CD8-positive, alpha-beta T cell (primary cell): ENCODE measurements at regions of chr7 and their contacts with region 1.

Region 1: GRCh38 chr7:92833024-92833765 is 3.2 kb downstream of the CDK6 start:
- DNase-seq: peak; percentile 78 to 93 (median 88)
- ATAC-seq: peak; percentile 71
- H3K4me3 ChIP-seq: peak overlapping the region; percentile 85 to 96
- H3K4me3 Mint-ChIP-seq: peak overlapping the region; percentile 98
- H3K27ac ChIP-seq: peak overlapping the region; percentile 46 to 68
- H3K27ac Mint-ChIP-seq: peak overlapping the region; percentile 92
- H3K4me1 ChIP-seq: peaks cover 39% of the 10 kb centered on the region
- H3K4me1 Mint-ChIP-seq: peaks cover 60% of the 10 kb centered on the region
- H3K27me3 ChIP-seq: peaks cover 0 to 3% of the 10 kb centered on the region in 2 experiments
- H3K27me3 Mint-ChIP-seq: peaks cover 4% of the 10 kb centered on the region
- CTCF ChIP-seq: peak; percentile 81

Region 2: GRCh38 chr7:92245487-92246362 is 587.5 kb before region 1 on chr7 and contains the starts of genes ANKIB1 and KRIT1:
- CTCF ChIA-PET with region 1: no interaction called
- POLR2A ChIA-PET with region 1: no interaction called
- intact Hi-C with region 1: loop called in 1 of 2 experiments (anchors 10 kb)
- DNase-seq: peak; percentile 65 to 93 (median 88)
- ATAC-seq: peak; percentile 74
- H3K4me3 ChIP-seq: peak within 1 kb of the TSS; percentile 86 to 90
- H3K4me3 Mint-ChIP-seq: peak within 1 kb of the TSS; percentile 98
- H3K27ac ChIP-seq: peak within 1 kb of the TSS; percentile 93 to 98
- H3K27ac Mint-ChIP-seq: peak within 1 kb of the TSS; percentile 99
- H3K4me1 ChIP-seq: peaks cover 29% of the 10 kb centered on the region
- H3K4me1 Mint-ChIP-seq: peaks cover 52% of the 10 kb centered on the region
- H3K27me3 ChIP-seq: no peaks in the 10 kb centered on the region
- H3K27me3 Mint-ChIP-seq: no peaks in the 10 kb centered on the region
- CTCF ChIP-seq: no peak
- total RNA-seq, gene ANKIB1: 51.1 to 59.6 TPM
- total RNA-seq, gene KRIT1: 25.0 to 27.0 TPM

Region 3: GRCh38 chr7:92534572-92534971 is 298.6 kb before region 1 on chr7:
- CTCF ChIA-PET with region 1: interaction called, 3 read pairs
- POLR2A ChIA-PET with region 1: no interaction called
- intact Hi-C with region 1: loop called in 1 of 2 experiments (anchors 5 kb)
- DNase-seq: no peak
- ATAC-seq: no peak
- H3K4me3 ChIP-seq: no peak overlapping the region
- H3K4me3 Mint-ChIP-seq: no peak overlapping the region
- H3K27ac ChIP-seq: no peak overlapping the region
- H3K27ac Mint-ChIP-seq: no peak overlapping the region
- H3K4me1 ChIP-seq: peaks cover 11% of the 10 kb centered on the region
- H3K4me1 Mint-ChIP-seq: peaks cover 38% of the 10 kb centered on the region
- H3K27me3 ChIP-seq: no peaks in the 10 kb centered on the region
- H3K27me3 Mint-ChIP-seq: no peaks in the 10 kb centered on the region
- CTCF ChIP-seq: no peak

Region 4: DNA sequence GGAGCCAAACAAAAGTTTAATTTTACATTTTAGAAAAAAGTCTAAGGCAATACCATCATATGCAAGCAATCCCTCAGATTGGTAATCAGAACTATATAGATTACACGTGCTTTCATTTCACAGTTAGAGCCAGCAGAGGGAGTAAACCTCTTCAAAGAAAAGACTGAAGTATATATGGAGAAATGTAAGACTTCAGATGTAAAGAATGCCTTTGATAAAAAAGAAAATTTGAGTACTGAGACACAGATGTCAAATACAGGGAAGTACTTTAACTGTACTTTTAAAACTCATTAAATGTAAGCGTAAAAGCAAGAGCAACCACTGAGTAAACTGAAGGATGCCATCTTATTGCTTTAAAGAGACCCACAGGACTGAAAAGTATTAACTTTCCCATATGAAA is 141.6 kb before region 1 on chr7:
- CTCF ChIA-PET with region 1: interaction called, 15 read pairs
- POLR2A ChIA-PET with region 1: no interaction called
- intact Hi-C with region 1: loop called (anchors 1 kb)
- DNase-seq: peak in 3 of 9 experiments; percentile 17 to 68 (median 49)
- ATAC-seq: peak; percentile 86
- H3K4me3 ChIP-seq: no peak overlapping the region
- H3K4me3 Mint-ChIP-seq: no peak overlapping the region
- H3K27ac ChIP-seq: no peak overlapping the region
- H3K27ac Mint-ChIP-seq: no peak overlapping the region
- H3K4me1 ChIP-seq: peaks cover 11% of the 10 kb centered on the region
- H3K4me1 Mint-ChIP-seq: peaks cover 30% of the 10 kb centered on the region
- H3K27me3 ChIP-seq: no peaks in the 10 kb centered on the region
- H3K27me3 Mint-ChIP-seq: no peaks in the 10 kb centered on the region
- CTCF ChIP-seq: peak; percentile 73

Region 5: DNA sequence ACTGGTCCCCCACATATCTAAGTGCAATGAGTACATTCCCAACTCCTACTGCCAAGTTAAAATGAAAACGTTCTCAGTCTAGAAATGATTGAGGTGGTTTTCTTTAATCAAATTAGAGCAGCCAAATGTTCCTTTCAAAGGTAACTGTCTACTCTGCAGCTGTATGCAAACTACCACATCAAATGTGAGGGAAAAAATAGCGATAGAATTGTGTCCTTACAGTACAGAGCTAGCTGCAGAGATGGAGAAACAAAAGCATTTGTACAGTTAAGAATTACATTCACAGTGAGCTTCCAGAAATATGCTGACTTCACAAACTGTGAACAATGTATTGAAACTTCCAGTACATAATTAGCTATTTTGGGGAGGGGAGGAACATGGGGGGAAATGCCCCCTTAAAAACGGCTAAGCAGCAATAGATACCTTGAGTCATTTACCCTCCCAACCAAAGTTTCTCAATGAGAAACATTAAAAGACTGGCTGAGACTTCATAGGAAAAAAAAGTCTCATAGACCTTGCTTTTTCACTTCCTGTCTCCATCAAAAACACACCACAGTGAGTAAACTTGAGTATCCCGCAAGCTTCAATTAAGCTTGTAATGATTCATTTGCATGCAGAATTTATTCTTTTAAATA is 19.7 kb before region 1 on chr7:
- CTCF ChIA-PET with region 1: interaction called, 22 read pairs
- POLR2A ChIA-PET with region 1: interaction called, 12 read pairs
- intact Hi-C with region 1: loop called (anchors 2 kb)
- DNase-seq: peak in 2 of 9 experiments; percentile 16 to 60
- ATAC-seq: peak; percentile 58
- H3K4me3 ChIP-seq: no peak overlapping the region
- H3K4me3 Mint-ChIP-seq: peak overlapping the region; percentile 61
- H3K27ac ChIP-seq: peak overlapping the region in 1 of 2 experiments; percentile 32
- H3K27ac Mint-ChIP-seq: peak overlapping the region; percentile 72
- H3K4me1 ChIP-seq: peaks cover 25% of the 10 kb centered on the region
- H3K4me1 Mint-ChIP-seq: peaks cover 54% of the 10 kb centered on the region
- H3K27me3 ChIP-seq: no peaks in the 10 kb centered on the region
- H3K27me3 Mint-ChIP-seq: no peaks in the 10 kb centered on the region
- CTCF ChIP-seq: no peak

Region 6: GRCh38 chr7:93117852-93118530 is 284.8 kb after region 1 on chr7 and contains the start of gene SAMD9:
- CTCF ChIA-PET with region 1: no interaction called
- POLR2A ChIA-PET with region 1: no interaction called
- intact Hi-C with region 1: loop called (anchors 5 kb)
- DNase-seq: peak; percentile 18 to 91 (median 60)
- ATAC-seq: peak; percentile 99
- H3K4me3 ChIP-seq: peak within 1 kb of the TSS; percentile 61 to 64
- H3K4me3 Mint-ChIP-seq: peak within 1 kb of the TSS; percentile 80
- H3K27ac ChIP-seq: peak within 1 kb of the TSS; percentile 58 to 81
- H3K27ac Mint-ChIP-seq: peak within 1 kb of the TSS; percentile 84
- H3K4me1 ChIP-seq: peaks cover 28% of the 10 kb centered on the region
- H3K4me1 Mint-ChIP-seq: peaks cover 47% of the 10 kb centered on the region
- H3K27me3 ChIP-seq: no peaks in the 10 kb centered on the region
- H3K27me3 Mint-ChIP-seq: no peaks in the 10 kb centered on the region
- CTCF ChIP-seq: no peak
- total RNA-seq, gene SAMD9: 23.5 to 23.8 TPM

Region 7: DNA sequence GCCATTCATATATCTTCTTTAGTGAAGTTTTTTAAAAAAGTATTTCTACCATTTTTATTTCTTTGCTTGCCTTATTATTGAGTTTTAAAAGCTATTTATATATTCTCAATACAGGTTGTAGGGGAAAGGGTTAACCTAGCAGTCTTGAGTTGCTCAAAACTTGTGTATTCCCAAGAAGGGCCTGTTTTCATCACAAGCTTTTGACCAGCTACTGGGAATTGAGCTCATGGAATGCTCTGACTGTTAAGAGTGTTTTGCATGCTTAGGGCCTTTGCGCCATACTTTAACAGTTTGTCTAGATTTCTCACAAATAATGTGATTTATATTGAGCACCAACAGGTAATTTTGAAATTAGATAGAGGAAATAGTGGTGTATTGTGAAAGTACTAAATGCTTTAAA is 813.3 kb after region 1 on chr7:
- CTCF ChIA-PET with region 1: no interaction called
- POLR2A ChIA-PET with region 1: no interaction called
- intact Hi-C with region 1: no loop called
- DNase-seq: no peak
- ATAC-seq: no peak
- H3K4me3 ChIP-seq: no peak overlapping the region
- H3K4me3 Mint-ChIP-seq: no peak overlapping the region
- H3K27ac ChIP-seq: no peak overlapping the region
- H3K27ac Mint-ChIP-seq: no peak overlapping the region
- H3K4me1 ChIP-seq: no peaks in the 10 kb centered on the region
- H3K4me1 Mint-ChIP-seq: no peaks in the 10 kb centered on the region
- H3K27me3 ChIP-seq: no peaks in the 10 kb centered on the region
- H3K27me3 Mint-ChIP-seq: no peaks in the 10 kb centered on the region
- CTCF ChIP-seq: no peak

Region 8: DNA sequence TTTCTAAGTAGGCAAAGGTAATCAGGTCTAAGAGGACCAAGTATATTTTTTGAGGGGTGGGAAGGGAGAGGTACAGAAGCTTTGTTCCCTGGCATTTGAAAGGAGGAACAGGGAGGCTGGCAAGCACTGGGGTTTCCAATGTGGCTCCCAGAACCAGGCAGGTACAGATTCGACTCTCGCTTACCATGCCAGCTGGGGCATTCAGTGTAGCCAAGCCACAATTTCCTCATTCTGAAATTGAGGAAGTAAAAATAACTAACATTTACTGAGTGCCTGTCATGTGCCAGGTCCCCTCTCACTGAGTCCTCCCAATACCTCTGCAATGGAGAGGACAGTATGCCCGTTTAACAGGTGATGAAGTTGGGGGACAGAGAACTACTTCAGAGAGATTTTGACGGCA is 1216.9 kb after region 1 on chr7:
- CTCF ChIA-PET with region 1: no interaction called
- POLR2A ChIA-PET with region 1: no interaction called
- intact Hi-C with region 1: no loop called
- DNase-seq: peak in 1 of 9 experiments; percentile 19
- ATAC-seq: no peak
- H3K4me3 ChIP-seq: no peak overlapping the region
- H3K4me3 Mint-ChIP-seq: no peak overlapping the region
- H3K27ac ChIP-seq: no peak overlapping the region
- H3K27ac Mint-ChIP-seq: no peak overlapping the region
- H3K4me1 ChIP-seq: no peaks in the 10 kb centered on the region
- H3K4me1 Mint-ChIP-seq: no peaks in the 10 kb centered on the region
- H3K27me3 ChIP-seq: peaks cover 2 to 4% of the 10 kb centered on the region in 2 experiments
- H3K27me3 Mint-ChIP-seq: peaks cover 20% of the 10 kb centered on the region
- CTCF ChIP-seq: no peak